Activated naive CD4-positive, alpha-beta T cell treated with anti-CD3 and anti-CD28 coated beads for 36 hours (primary cell): ENCODE measurements at regions of chr2 and their contacts with region 1.

Region 1: GRCh38 chr2:69829256-69830046 is at the start of gene GMCL1:
- DNase-seq: peak; percentile 99
- H3K4me3 Mint-ChIP-seq: peak within 1 kb of the TSS; percentile 94
- H3K27ac Mint-ChIP-seq: peak within 1 kb of the TSS; percentile 88
- H3K4me1 Mint-ChIP-seq: peaks cover 51% of the 10 kb centered on the region
- H3K27me3 Mint-ChIP-seq: no peaks in the 10 kb centered on the region
- total RNA-seq, gene GMCL1: 15.9 to 19.4 TPM

Region 2: GRCh38 chr2:69012310-69013141 is 816.9 kb before region 1 on chr2:
- CTCF ChIA-PET with region 1: no interaction called
- intact Hi-C with region 1: no loop called
- DNase-seq: peak; percentile 53
- H3K4me3 Mint-ChIP-seq: peak overlapping the region; percentile 68
- H3K27ac Mint-ChIP-seq: no peak overlapping the region
- H3K4me1 Mint-ChIP-seq: peaks cover 10% of the 10 kb centered on the region
- H3K27me3 Mint-ChIP-seq: peaks cover 33% of the 10 kb centered on the region

Region 3: DNA sequence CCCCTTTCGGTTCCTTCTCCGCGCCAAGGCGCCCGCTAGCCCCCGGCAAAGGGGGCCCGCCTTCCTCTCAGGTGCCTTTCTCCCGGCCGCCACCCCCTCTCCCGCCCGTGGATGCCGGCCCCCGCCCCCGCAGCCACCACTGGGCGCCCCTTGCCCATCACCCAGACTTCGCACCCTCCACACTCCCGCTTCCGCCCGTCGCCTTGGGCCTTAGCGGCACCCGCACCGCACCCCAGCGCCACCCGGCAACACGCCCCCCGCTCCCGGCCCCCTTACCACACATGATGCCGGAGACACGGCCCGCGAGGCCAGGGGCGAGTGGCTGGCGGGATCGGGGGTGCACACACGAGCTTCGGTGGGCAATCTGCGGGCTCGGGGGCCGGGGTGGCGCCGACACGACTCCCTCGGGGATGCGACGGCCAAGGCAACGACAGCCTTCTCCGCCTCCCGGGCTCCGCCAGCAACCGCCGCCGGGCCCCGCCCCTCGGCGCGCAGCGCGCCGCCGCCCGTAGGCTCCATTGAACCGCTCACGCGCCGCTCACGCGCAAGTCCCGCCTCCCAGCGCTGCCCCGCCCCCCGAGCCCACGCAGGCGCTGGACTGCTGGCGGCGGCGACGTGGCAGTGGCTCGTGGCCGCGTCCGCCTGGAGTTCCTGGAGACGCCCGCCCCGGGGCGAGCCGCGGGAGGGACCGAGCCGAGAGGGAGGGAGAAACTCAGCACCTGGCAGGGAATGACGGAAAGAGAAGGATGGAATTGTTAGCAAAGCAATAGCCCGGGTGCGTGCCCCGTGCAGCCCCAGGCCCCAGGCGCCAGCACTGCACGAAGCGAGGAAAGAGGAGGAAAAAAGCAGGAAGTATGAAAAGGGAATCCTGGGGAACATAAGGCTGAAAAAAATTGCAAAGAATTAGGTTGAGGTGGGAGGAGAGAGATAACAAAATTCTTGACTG is 442.4 kb before region 1 on chr2 and contains the start of gene GFPT1:
- CTCF ChIA-PET with region 1: no interaction called
- intact Hi-C with region 1: loop called (anchors 1 kb)
- DNase-seq: peak; percentile 93
- H3K4me3 Mint-ChIP-seq: peak within 1 kb of the TSS; percentile 93
- H3K27ac Mint-ChIP-seq: peak within 1 kb of the TSS; percentile 83
- H3K4me1 Mint-ChIP-seq: peaks cover 42% of the 10 kb centered on the region
- H3K27me3 Mint-ChIP-seq: no peaks in the 10 kb centered on the region
- total RNA-seq, gene GFPT1: 34.6 to 36.0 TPM

Region 4: DNA sequence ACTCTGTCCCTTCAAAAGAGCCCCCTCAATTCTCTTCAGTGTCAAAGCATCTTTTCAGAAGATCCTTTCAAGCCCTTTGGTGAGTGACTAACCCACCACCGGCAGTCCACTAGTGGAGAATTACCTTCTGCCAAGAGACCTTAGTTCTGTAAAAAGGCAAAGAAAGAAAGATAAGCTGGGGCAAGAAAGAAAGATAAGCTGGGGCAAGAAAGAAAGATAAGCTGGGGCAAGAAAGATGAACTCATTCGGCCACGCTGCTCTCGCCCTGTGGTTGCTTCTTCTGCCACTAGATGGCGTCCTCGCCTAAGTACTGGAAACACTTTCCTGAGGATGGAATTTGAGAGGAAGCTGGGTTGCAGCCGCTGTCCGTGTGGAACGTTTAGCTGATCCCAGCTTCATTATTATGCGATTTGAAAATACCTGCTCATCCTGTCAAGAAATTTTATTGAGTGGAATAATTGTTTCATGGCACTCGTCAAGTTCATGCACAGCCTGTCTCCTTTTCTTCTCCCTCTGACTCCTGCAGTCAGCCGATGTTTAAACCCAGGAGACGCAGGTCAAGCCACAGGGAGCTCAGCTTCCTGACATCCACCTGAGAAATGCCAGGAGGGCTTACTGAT is 104.8 kb before region 1 on chr2:
- CTCF ChIA-PET with region 1: interaction called, 20 read pairs
- intact Hi-C with region 1: no loop called
- DNase-seq: peak; percentile 95
- H3K4me3 Mint-ChIP-seq: peak overlapping the region; percentile 61
- H3K27ac Mint-ChIP-seq: no peak overlapping the region
- H3K4me1 Mint-ChIP-seq: no peaks in the 10 kb centered on the region
- H3K27me3 Mint-ChIP-seq: no peaks in the 10 kb centered on the region

Region 5: GRCh38 chr2:69816923-69817542 is 12.4 kb before region 1 on chr2:
- CTCF ChIA-PET with region 1: interaction called, 19 read pairs
- intact Hi-C with region 1: loop called (anchors 1 kb)
- DNase-seq: peak; percentile 88
- H3K4me3 Mint-ChIP-seq: no peak overlapping the region
- H3K27ac Mint-ChIP-seq: no peak overlapping the region
- H3K4me1 Mint-ChIP-seq: peaks cover 2% of the 10 kb centered on the region
- H3K27me3 Mint-ChIP-seq: no peaks in the 10 kb centered on the region

Region 6: DNA sequence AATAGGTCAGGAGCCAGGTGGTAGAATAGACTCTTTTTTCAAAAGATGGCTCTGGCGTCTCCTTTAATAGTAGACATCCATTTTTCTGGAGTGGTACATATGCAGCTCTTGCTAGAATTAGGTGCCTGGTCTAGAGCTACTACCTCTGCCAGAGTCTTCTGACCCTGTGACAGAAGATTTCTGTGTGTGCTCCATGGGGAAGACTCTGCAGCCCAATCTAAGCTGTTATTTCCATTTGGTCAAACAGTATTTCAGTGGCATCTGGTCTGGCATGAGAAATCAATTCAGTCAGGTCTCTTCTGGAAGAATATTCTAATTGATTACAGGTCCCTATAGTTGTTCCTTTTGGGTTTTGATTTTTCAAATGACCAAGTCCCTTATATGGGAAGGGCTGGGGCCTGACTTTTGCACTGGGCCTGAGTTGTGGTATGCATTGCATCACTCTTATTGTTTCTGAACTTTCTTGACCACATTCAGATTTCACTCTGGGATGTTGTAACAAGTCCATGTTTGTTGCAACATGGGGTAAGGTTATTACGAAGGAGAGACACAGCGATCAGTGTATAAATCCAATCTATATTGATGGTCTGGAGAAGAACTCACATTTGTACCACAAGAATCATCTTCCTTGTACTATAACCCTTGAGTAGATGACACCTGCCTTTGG is 97.5 kb after region 1 on chr2:
- CTCF ChIA-PET with region 1: no interaction called
- intact Hi-C with region 1: no loop called
- DNase-seq: no peak
- H3K4me3 Mint-ChIP-seq: no peak overlapping the region
- H3K27ac Mint-ChIP-seq: no peak overlapping the region
- H3K4me1 Mint-ChIP-seq: peaks cover 25% of the 10 kb centered on the region
- H3K27me3 Mint-ChIP-seq: no peaks in the 10 kb centered on the region

Region 7: DNA sequence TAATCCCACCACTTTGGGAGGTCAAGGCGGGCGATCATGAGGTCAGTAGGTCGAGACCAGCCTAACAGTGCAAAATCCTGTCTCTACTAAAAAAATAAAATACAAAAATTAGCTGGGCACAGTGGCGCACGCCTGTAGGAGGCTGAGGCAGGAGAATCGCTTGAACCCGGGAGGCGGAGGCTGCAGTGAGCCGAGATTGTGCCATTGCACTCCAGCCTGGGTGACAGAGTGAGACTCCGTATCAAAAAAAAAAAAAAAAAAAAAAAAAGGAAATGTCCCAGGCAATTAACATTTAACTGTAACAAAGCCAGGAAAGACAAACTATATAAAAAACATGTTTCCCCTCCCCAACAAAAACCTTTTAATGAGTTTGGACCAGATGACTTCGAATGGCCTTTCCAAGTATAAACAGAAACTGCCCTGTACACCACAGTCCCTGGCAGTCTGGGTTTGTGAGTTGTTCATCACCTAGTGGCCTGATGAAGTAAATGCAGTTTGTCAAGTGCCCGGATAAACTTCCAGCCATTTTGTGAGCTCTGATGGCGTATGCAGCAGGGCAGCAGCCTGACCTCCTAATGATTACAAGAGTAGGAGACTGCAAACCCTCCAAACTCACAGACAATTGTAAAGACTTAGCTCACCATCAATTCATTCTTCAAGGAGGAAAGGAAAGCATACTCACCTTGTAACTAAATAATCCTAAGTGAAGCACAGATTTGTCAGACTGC is 241.3 kb after region 1 on chr2:
- CTCF ChIA-PET with region 1: no interaction called
- intact Hi-C with region 1: loop called (anchors 1 kb)
- DNase-seq: peak; percentile 76
- H3K4me3 Mint-ChIP-seq: peak overlapping the region; percentile 54
- H3K27ac Mint-ChIP-seq: peak overlapping the region; percentile 94
- H3K4me1 Mint-ChIP-seq: peaks cover 57% of the 10 kb centered on the region
- H3K27me3 Mint-ChIP-seq: no peaks in the 10 kb centered on the region

Region 8: GRCh38 chr2:70190418-70191243 is 361.2 kb after region 1 on chr2 and contains the start of gene C2orf42:
- CTCF ChIA-PET with region 1: no interaction called
- intact Hi-C with region 1: loop called (anchors 1 kb)
- DNase-seq: peak; percentile 98
- H3K4me3 Mint-ChIP-seq: peak within 1 kb of the TSS; percentile 87
- H3K27ac Mint-ChIP-seq: peak within 1 kb of the TSS; percentile 98
- H3K4me1 Mint-ChIP-seq: peaks cover 21% of the 10 kb centered on the region
- H3K27me3 Mint-ChIP-seq: no peaks in the 10 kb centered on the region
- total RNA-seq, gene C2orf42: 19.2 to 23.3 TPM